Ascending aorta (tissue), 2 donors: ENCODE measurements at regions of chr2 and their contacts with region 1.

Region 1: GRCh38 chr2:159797543-159798375 is at the start of gene CD302:
- DNase-seq: peak in 1 of 2 donors; percentile 84
- H3K4me3 ChIP-seq: peak within 1 kb of the TSS; percentile 75 to 98
- H3K27ac ChIP-seq: peak within 1 kb of the TSS; percentile 87 to 88
- H3K4me1 ChIP-seq: peaks cover 0 to 14% of the 10 kb centered on the region in 2 donors
- H3K27me3 ChIP-seq: no peaks in the 10 kb centered on the region
- CTCF ChIP-seq: no peak
- total RNA-seq, gene CD302: 30.9 TPM

Region 2: GRCh38 chr2:159518321-159519005 is 279.3 kb before region 1 on chr2:
- intact Hi-C with region 1: no loop called
- DNase-seq: no peak
- H3K4me3 ChIP-seq: no peak overlapping the region
- H3K27ac ChIP-seq: no peak overlapping the region
- H3K4me1 ChIP-seq: peaks cover 0 to 13% of the 10 kb centered on the region in 2 donors
- H3K27me3 ChIP-seq: no peaks in the 10 kb centered on the region
- CTCF ChIP-seq: no peak

Region 3: GRCh38 chr2:159712143-159712928 is 85.4 kb before region 1 on chr2 and contains the start of gene MARCHF7:
- intact Hi-C with region 1: loop called (anchors 5 kb)
- DNase-seq: peak; percentile 82 to 98
- H3K4me3 ChIP-seq: peak within 1 kb of the TSS; percentile 82 to 94
- H3K27ac ChIP-seq: peak within 1 kb of the TSS; percentile 97 to 98
- H3K4me1 ChIP-seq: peaks cover 3 to 31% of the 10 kb centered on the region in 2 donors
- H3K27me3 ChIP-seq: no peaks in the 10 kb centered on the region
- CTCF ChIP-seq: peak; percentile 16 to 51 (median 36)
- total RNA-seq, gene MARCHF7: 49.4 TPM

Region 4: DNA sequence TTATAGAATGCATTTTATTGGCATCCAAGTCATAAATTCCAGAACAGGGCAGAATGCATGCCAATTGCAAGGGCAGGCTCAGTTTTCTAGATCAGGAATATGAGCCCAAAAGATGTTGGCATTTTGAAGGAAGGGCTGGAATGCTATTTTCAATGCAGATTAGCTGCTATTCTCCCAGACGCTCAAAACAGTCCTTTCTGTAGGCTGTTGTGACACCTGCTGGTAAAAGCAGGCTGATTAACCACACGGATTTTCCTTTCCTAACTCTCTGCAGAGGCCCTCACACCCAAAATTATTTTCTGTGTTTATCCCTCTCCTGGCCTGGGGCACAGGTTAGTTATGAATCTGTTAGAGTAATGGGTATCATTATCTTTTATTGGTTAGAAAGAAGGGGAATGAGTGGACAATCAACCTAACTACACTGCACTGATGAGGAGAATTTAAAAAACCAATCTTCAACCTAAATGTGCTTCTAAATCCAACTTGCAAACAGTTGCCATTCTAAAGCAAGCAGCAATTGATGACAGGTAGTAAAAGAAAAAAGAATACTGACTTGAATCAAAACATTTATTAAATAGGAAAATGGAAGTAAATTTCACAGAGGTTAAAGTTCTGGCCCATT is 170.6 kb after region 1 on chr2:
- intact Hi-C with region 1: loop called (anchors 10 kb)
- DNase-seq: no peak
- H3K4me3 ChIP-seq: no peak overlapping the region
- H3K27ac ChIP-seq: no peak overlapping the region
- H3K4me1 ChIP-seq: no peaks in the 10 kb centered on the region
- H3K27me3 ChIP-seq: no peaks in the 10 kb centered on the region
- CTCF ChIP-seq: peak; percentile 26 to 62 (median 47)